Activated CD8-positive, alpha-beta T cell treated with anti-CD3 and anti-CD28 coated beads, Interleukin-2, amount 10 ng/mL, durations not matched to agents 7 days and 5 days (primary cell): ENCODE measurements at regions of chr3 and their contacts with region 1.

Region 1: GRCh38 chr3:110314512-110315114 is 757.0 kb upstream of the NECTIN3 start:
- DNase-seq: peak; percentile 65
- ATAC-seq: peak; percentile 79
- H3K4me3 Mint-ChIP-seq: no peak overlapping the region
- H3K27ac Mint-ChIP-seq: no peak overlapping the region
- H3K4me1 Mint-ChIP-seq: no peaks in the 10 kb centered on the region
- H3K27me3 Mint-ChIP-seq: peaks cover 2% of the 10 kb centered on the region

Region 2: GRCh38 chr3:109532257-109533216 is 782.1 kb before region 1 on chr3:
- CTCF ChIA-PET with region 1: interaction called, 17 read pairs
- POLR2A ChIA-PET with region 1: interaction called, 3 read pairs
- DNase-seq: peak; percentile 63
- ATAC-seq: peak; percentile 76
- H3K4me3 Mint-ChIP-seq: no peak overlapping the region
- H3K27ac Mint-ChIP-seq: no peak overlapping the region
- H3K4me1 Mint-ChIP-seq: peaks cover 3% of the 10 kb centered on the region
- H3K27me3 Mint-ChIP-seq: no peaks in the 10 kb centered on the region

Region 3: GRCh38 chr3:109731620-109732473 is 582.8 kb before region 1 on chr3:
- CTCF ChIA-PET with region 1: interaction called, 10 read pairs
- POLR2A ChIA-PET with region 1: no interaction called
- DNase-seq: peak; percentile 72
- ATAC-seq: peak; percentile 70
- H3K4me3 Mint-ChIP-seq: no peak overlapping the region
- H3K27ac Mint-ChIP-seq: no peak overlapping the region
- H3K4me1 Mint-ChIP-seq: peaks cover 4% of the 10 kb centered on the region
- H3K27me3 Mint-ChIP-seq: no peaks in the 10 kb centered on the region

Region 4: GRCh38 chr3:109900774-109901173 is 413.8 kb before region 1 on chr3:
- CTCF ChIA-PET with region 1: no interaction called
- POLR2A ChIA-PET with region 1: no interaction called
- DNase-seq: no peak
- ATAC-seq: no peak
- H3K4me3 Mint-ChIP-seq: no peak overlapping the region
- H3K27ac Mint-ChIP-seq: no peak overlapping the region
- H3K4me1 Mint-ChIP-seq: peaks cover 11% of the 10 kb centered on the region
- H3K27me3 Mint-ChIP-seq: no peaks in the 10 kb centered on the region

Region 5: GRCh38 chr3:110479731-110480130 is 165.1 kb after region 1 on chr3:
- CTCF ChIA-PET with region 1: no interaction called
- POLR2A ChIA-PET with region 1: no interaction called
- DNase-seq: no peak
- ATAC-seq: no peak
- H3K4me3 Mint-ChIP-seq: no peak overlapping the region
- H3K27ac Mint-ChIP-seq: no peak overlapping the region
- H3K4me1 Mint-ChIP-seq: no peaks in the 10 kb centered on the region
- H3K27me3 Mint-ChIP-seq: no peaks in the 10 kb centered on the region

Region 6: GRCh38 chr3:110608566-110608965 is 294.0 kb after region 1 on chr3:
- CTCF ChIA-PET with region 1: no interaction called
- POLR2A ChIA-PET with region 1: no interaction called
- DNase-seq: no peak
- ATAC-seq: no peak
- H3K4me3 Mint-ChIP-seq: no peak overlapping the region
- H3K27ac Mint-ChIP-seq: no peak overlapping the region
- H3K4me1 Mint-ChIP-seq: no peaks in the 10 kb centered on the region
- H3K27me3 Mint-ChIP-seq: no peaks in the 10 kb centered on the region

Region 7: GRCh38 chr3:110743202-110743601 is 428.6 kb after region 1 on chr3:
- CTCF ChIA-PET with region 1: no interaction called
- POLR2A ChIA-PET with region 1: no interaction called
- DNase-seq: no peak
- ATAC-seq: no peak
- H3K4me3 Mint-ChIP-seq: no peak overlapping the region
- H3K27ac Mint-ChIP-seq: no peak overlapping the region
- H3K4me1 Mint-ChIP-seq: no peaks in the 10 kb centered on the region
- H3K27me3 Mint-ChIP-seq: no peaks in the 10 kb centered on the region